Prostate gland (tissue), 2 donors: ENCODE measurements at regions of chr5 and their contacts with region 1.

Region 1: GRCh38 chr5:134411546-134412266 is at the start of gene CDKN2AIPNL:
- DNase-seq: peak; percentile 90
- H3K4me3 ChIP-seq: peak within 1 kb of the TSS; percentile 65 to 81
- H3K27ac ChIP-seq: peak within 1 kb of the TSS; percentile 66 to 67
- H3K4me1 ChIP-seq: peaks cover 11% of the 10 kb centered on the region
- H3K27me3 ChIP-seq: no peaks in the 10 kb centered on the region
- CTCF ChIP-seq: peak; percentile 44 to 94 (median 91)
- POLR2A ChIP-seq: peak; percentile 64
- total RNA-seq, gene CDKN2AIPNL: 16.8 to 41.3 TPM

Region 2: GRCh38 chr5:134267366-134268018 is 144.2 kb before region 1 on chr5:
- intact Hi-C with region 1: no loop called
- DNase-seq: no peak
- H3K4me3 ChIP-seq: no peak overlapping the region
- H3K27ac ChIP-seq: no peak overlapping the region
- H3K4me1 ChIP-seq: no peaks in the 10 kb centered on the region
- H3K27me3 ChIP-seq: no peaks in the 10 kb centered on the region
- CTCF ChIP-seq: no peak
- POLR2A ChIP-seq: no peak

Region 3: GRCh38 chr5:134439210-134439664 is 27.5 kb after region 1 on chr5:
- intact Hi-C with region 1: loop called (anchors 2 kb)
- DNase-seq: peak; percentile 95
- H3K4me3 ChIP-seq: no peak overlapping the region
- H3K27ac ChIP-seq: peak overlapping the region; percentile 20 to 64
- H3K4me1 ChIP-seq: peaks cover 15% of the 10 kb centered on the region
- H3K27me3 ChIP-seq: no peaks in the 10 kb centered on the region
- CTCF ChIP-seq: peak in 2 of 4 experiments; percentile 29 to 34
- POLR2A ChIP-seq: no peak

Region 4: DNA sequence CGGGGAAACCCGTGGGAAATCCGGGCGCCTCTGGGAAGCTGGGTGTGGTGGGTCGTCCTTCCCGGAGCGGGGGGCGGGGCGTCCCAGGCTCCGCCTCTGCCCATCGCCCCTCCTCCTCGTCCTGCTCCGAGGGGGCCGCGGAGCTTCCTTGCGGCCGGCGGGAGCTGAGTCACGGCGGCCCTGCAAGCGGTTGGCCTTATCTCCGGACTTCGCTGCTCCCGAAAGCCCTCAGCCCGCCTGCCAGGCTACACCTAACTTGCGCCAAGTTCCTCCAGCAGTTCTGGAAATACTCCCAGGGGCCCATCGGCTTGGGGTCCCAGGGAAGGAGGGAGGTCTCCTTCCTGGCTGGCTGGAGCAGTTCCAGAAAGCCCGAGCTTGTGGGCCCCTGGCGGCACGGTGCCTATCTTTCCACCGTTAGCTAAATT is 54.1 kb after region 1 on chr5:
- intact Hi-C with region 1: loop called (anchors 10 kb)
- DNase-seq: peak; percentile 87
- H3K4me3 ChIP-seq: peak overlapping the region; percentile 26 to 40
- H3K27ac ChIP-seq: peak overlapping the region; percentile 88 to 92
- H3K4me1 ChIP-seq: peaks cover 6% of the 10 kb centered on the region
- H3K27me3 ChIP-seq: no peaks in the 10 kb centered on the region
- CTCF ChIP-seq: no peak
- POLR2A ChIP-seq: peak; percentile 68

Region 5: DNA sequence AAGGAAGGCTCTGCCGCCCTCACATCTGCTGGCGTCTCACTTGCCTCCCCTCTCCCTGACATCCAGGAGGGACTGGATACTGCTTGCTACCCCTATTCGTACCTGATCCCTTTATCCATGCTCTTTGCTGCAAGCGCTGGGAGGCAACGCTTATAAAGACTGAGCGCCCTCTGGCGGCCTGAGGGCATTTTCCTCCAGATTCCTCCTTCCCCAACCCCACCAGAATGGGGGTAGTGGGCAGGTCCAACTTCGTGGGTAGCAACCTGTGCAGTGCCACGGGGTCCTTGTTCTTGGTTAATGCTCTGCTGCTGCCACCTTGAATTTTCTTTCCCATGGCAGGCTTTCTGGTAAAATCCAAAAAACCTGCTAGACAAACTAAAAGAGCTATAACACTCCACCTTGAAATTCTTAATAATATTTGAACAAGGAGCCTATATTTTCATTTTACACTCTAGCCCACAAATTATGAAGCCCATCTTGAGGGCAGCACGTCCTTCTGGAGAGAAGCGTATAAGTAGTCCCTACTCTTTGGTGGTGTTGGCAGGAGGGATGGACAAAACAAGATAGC is 166.2 kb after region 1 on chr5:
- intact Hi-C with region 1: loop called (anchors 5 kb)
- DNase-seq: peak; percentile 78
- H3K4me3 ChIP-seq: no peak overlapping the region
- H3K27ac ChIP-seq: no peak overlapping the region
- H3K4me1 ChIP-seq: no peaks in the 10 kb centered on the region
- H3K27me3 ChIP-seq: no peaks in the 10 kb centered on the region
- CTCF ChIP-seq: peak; percentile 61 to 86 (median 82)
- POLR2A ChIP-seq: no peak